Mucosa of descending colon (tissue), 3 donors: ENCODE measurements at regions of chr17 and their contacts with region 1.

Region 1: GRCh38 chr17:794876-795275 is 12.7 kb downstream of the MRM3 start:
- DNase-seq: peak; percentile 76 to 87 (median 84)
- ATAC-seq: peak; percentile 93
- H3K4me3 ChIP-seq: no peak overlapping the region
- H3K4me1 ChIP-seq: peaks cover 3% of the 10 kb centered on the region
- CTCF ChIP-seq: peak; percentile 56

Region 2: GRCh38 chr17:979538-980405 is 184.9 kb after region 1 on chr17 and contains the start of gene NXN:
- intact Hi-C with region 1: loop called (anchors 5 to 10 kb)
- DNase-seq: peak; percentile 89 to 94 (median 91)
- ATAC-seq: peak; percentile 99
- H3K4me3 ChIP-seq: peak within 1 kb of the TSS; percentile 11
- H3K4me1 ChIP-seq: peaks cover 16% of the 10 kb centered on the region
- CTCF ChIP-seq: no peak
- total RNA-seq, gene NXN: 5.3 to 98.1 (median 9.7) TPM